ENCODE measurements at regions of chr17 and their contacts with region 1.

Region 1: GRCh38 chr17:45277216-45277849 is 15.4 kb upstream of the SPATA32 start:
- H3K4me3 ChIP-seq: no peak overlapping the region
- H3K27ac ChIP-seq: no peak overlapping the region
- H3K4me1 ChIP-seq: peaks cover 5% of the 10 kb centered on the region
- CTCF ChIP-seq: peak; percentile 55

Region 2: GRCh38 chr17:45235416-45236281 is 41.7 kb before region 1 on chr17:
- CTCF ChIA-PET with region 1: interaction called, 20 read pairs
- POLR2A ChIA-PET with region 1: no interaction called
- H3K4me3 ChIP-seq: no peak overlapping the region
- H3K27ac ChIP-seq: no peak overlapping the region
- H3K4me1 ChIP-seq: no peaks in the 10 kb centered on the region
- CTCF ChIP-seq: peak; percentile 66

Region 3: GRCh38 chr17:45261577-45262515 is 15.5 kb before region 1 on chr17 and contains the start of gene SPATA32:
- CTCF ChIA-PET with region 1: interaction called, 42 read pairs
- POLR2A ChIA-PET with region 1: no interaction called
- H3K4me3 ChIP-seq: no peak within 1 kb of the TSS
- H3K27ac ChIP-seq: no peak within 1 kb of the TSS
- H3K4me1 ChIP-seq: no peaks in the 10 kb centered on the region
- CTCF ChIP-seq: no peak

Region 4: GRCh38 chr17:45307290-45308015 is 30.1 kb after region 1 on chr17:
- CTCF ChIA-PET with region 1: interaction called, 61 read pairs
- POLR2A ChIA-PET with region 1: interaction called, 13 read pairs
- H3K4me3 ChIP-seq: no peak overlapping the region
- H3K27ac ChIP-seq: peak overlapping the region; percentile 35; the same call in 1 of the 2 replicates
- H3K4me1 ChIP-seq: peaks cover 31% of the 10 kb centered on the region
- CTCF ChIP-seq: no peak

Region 5: GRCh38 chr17:45371414-45372327 is 94.3 kb after region 1 on chr17:
- CTCF ChIA-PET with region 1: interaction called, 27 read pairs
- POLR2A ChIA-PET with region 1: interaction called, 4 read pairs
- H3K4me3 ChIP-seq: peak overlapping the region; percentile 21
- H3K27ac ChIP-seq: peak overlapping the region; percentile 55
- H3K4me1 ChIP-seq: 0 out of 2 replicates have a peak, but pooled peaks cover 7% of the 10 kb centered on the region
- CTCF ChIP-seq: peak; percentile 58; the same call in 1 of the 2 replicates

Region 6: DNA sequence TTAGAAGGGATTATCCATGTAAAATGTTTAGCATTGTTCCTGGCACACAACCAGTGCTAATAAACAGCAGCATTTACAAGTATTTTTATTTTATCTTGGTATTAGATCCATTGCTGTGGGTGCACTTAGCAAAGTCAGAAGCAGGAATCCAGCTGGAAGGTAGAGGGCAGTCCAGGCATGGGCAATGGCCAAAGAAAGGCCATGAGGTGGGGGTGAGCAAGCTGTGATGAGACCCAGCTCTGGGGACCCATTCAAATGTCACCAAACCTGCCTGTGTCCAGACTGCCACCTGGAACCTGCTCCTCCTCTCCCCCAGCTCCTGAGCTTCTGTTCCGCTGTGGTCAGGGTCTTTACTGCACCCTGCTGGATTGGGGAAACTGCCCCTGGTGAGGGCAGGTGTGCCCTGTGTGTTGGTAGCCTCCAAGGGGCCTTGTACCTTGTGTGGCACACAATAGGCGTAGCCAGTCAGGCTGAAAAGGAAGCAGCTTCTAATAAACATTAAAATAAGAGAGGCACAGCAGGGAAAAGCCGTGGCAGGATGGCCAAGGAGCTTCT is 388.8 kb after region 1 on chr17:
- CTCF ChIA-PET with region 1: no interaction called
- POLR2A ChIA-PET with region 1: no interaction called
- H3K4me3 ChIP-seq: no peak overlapping the region
- H3K27ac ChIP-seq: no peak overlapping the region
- H3K4me1 ChIP-seq: no peaks in the 10 kb centered on the region
- CTCF ChIP-seq: no peak

Measured in HEK293 (cell line).